MCF 10A (cell line): ENCODE measurements at regions of chr11 and their contacts with region 1.

Region 1: GRCh38 chr11:113494021-113494420 is 18.8 kb upstream of the DRD2 start:
- DNase-seq: peak; percentile 14
- H3K4me3 Mint-ChIP-seq: no peak overlapping the region
- H3K27ac Mint-ChIP-seq: no peak overlapping the region
- H3K4me1 Mint-ChIP-seq: no peaks in the 10 kb centered on the region
- H3K27me3 Mint-ChIP-seq: peaks cover 10% of the 10 kb centered on the region
- CTCF ChIP-seq: peak; percentile 35

Region 2: GRCh38 chr11:113296447-113297205 is 197.4 kb before region 1 on chr11:
- CTCF ChIA-PET with region 1: interaction called, 15 read pairs
- POLR2A ChIA-PET with region 1: no interaction called
- intact Hi-C with region 1: no loop called
- DNase-seq: no peak
- H3K4me3 Mint-ChIP-seq: no peak overlapping the region
- H3K27ac Mint-ChIP-seq: no peak overlapping the region
- H3K4me1 Mint-ChIP-seq: no peaks in the 10 kb centered on the region
- H3K27me3 Mint-ChIP-seq: peaks cover 65% of the 10 kb centered on the region
- CTCF ChIP-seq: no peak

Region 3: GRCh38 chr11:113305440-113306336 is 188.3 kb before region 1 on chr11:
- CTCF ChIA-PET with region 1: interaction called, 72 read pairs
- POLR2A ChIA-PET with region 1: no interaction called
- intact Hi-C with region 1: loop called (anchors 1 kb)
- DNase-seq: peak; percentile 79
- H3K4me3 Mint-ChIP-seq: no peak overlapping the region
- H3K27ac Mint-ChIP-seq: no peak overlapping the region
- H3K4me1 Mint-ChIP-seq: peaks cover 5% of the 10 kb centered on the region
- H3K27me3 Mint-ChIP-seq: peaks cover 13% of the 10 kb centered on the region
- CTCF ChIP-seq: peak; percentile 98

Region 4: DNA sequence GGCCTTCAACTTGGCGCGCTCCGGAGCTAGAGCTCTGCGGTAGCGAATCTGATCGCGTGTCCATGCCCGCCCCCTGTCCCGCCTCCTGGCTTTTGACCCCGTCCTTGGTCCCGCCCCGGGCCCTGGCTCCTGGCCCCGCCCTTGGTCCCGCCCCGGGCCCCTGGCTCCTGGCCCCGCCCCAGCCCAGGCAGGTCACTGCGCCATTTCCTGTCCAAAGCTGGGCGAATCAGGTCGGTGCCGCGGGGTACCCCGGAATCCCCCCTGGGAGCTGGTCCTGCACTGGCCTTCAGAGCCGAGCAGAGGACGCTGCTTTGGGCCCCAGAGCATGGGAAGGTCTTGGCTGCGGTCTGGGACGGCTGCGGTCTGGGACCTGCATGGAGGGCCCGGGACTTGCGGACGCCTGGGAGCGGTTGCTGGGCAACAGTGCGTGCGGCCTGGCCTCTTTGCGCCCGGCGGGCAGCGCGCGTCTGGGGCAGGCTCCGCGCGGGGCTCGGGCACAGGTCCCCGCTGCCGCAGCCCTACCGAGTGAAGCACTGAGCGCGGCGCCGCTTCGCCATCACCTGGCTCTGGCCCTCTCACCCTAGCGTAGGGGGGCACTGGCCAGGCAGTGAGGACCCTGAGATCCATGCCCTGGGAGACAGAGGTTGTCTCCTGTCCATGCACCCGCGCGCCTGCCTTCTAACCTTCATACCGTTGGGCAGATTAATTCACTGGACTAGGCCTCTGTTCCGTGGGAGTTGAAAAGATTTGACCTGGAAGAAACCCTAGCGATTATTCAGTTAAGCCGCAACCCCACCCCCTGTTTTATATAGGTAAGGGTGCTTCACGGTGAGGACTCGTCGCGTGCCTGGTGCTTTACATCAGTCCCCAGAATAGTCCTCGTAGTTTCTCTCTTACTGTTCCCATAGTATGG is 179.4 kb before region 1 on chr11 and contains the start of gene TTC12:
- CTCF ChIA-PET with region 1: interaction called, 21 read pairs
- POLR2A ChIA-PET with region 1: interaction called, 9 read pairs
- intact Hi-C with region 1: loop called (anchors 2 kb)
- DNase-seq: peak; percentile 92
- H3K4me3 Mint-ChIP-seq: peak within 1 kb of the TSS; percentile 80
- H3K27ac Mint-ChIP-seq: peak within 1 kb of the TSS; percentile 87
- H3K4me1 Mint-ChIP-seq: peaks cover 19% of the 10 kb centered on the region
- H3K27me3 Mint-ChIP-seq: no peaks in the 10 kb centered on the region
- CTCF ChIP-seq: no peak
- total RNA-seq, gene TTC12: 30.5 and 41.3 TPM in 2 replicates

Region 5: DNA sequence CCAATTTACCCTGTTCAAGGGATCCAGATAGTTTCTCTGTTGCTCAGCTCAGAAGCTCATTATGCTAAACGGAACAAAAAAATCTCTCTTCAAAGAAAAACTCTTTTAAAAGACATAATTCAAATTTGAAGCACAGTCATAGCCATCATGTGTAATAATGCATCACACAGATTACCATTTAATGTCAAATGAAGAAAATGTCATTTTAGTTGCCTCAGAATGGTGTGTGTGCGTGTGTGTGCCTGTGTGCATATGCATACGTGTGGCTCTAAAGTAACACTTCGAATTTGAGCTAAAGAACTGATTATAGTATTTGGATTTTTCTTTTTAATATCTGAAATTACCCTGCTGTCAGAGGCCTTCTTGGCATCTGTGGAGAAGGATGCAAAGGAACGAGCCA is 169.8 kb before region 1 on chr11:
- CTCF ChIA-PET with region 1: interaction called, 16 read pairs
- POLR2A ChIA-PET with region 1: no interaction called
- intact Hi-C with region 1: no loop called
- DNase-seq: no peak
- H3K4me3 Mint-ChIP-seq: no peak overlapping the region
- H3K27ac Mint-ChIP-seq: no peak overlapping the region
- H3K4me1 Mint-ChIP-seq: no peaks in the 10 kb centered on the region
- H3K27me3 Mint-ChIP-seq: no peaks in the 10 kb centered on the region
- CTCF ChIP-seq: no peak

Region 6: GRCh38 chr11:113532697-113533424 is 38.8 kb after region 1 on chr11:
- CTCF ChIA-PET with region 1: interaction called, 56 read pairs
- POLR2A ChIA-PET with region 1: no interaction called
- intact Hi-C with region 1: no loop called
- DNase-seq: peak; percentile 77
- H3K4me3 Mint-ChIP-seq: no peak overlapping the region
- H3K27ac Mint-ChIP-seq: no peak overlapping the region
- H3K4me1 Mint-ChIP-seq: peaks cover 20% of the 10 kb centered on the region
- H3K27me3 Mint-ChIP-seq: no peaks in the 10 kb centered on the region
- CTCF ChIP-seq: peak; percentile 89

Region 7: DNA sequence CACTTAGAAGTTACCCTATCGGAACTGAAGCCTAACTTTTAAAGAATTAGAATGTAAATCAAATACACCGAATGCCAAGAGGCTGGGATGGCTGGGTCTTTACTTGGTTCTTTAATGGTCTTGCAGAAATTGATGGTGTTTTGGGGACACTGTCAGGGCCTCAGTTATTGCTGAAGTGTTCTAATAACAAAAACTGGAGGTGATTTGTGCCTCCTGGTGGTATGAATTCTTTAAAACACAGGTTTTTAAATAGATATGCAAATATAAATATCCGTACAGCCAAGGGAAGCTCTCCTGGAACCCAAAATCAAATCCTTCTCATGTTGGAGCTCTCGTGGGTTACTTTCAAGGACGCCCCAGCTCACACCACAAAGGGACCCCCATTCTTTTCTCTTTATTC is 231.4 kb after region 1 on chr11:
- CTCF ChIA-PET with region 1: interaction called, 23 read pairs
- POLR2A ChIA-PET with region 1: no interaction called
- intact Hi-C with region 1: loop called (anchors 10 kb)
- DNase-seq: no peak
- H3K4me3 Mint-ChIP-seq: no peak overlapping the region
- H3K27ac Mint-ChIP-seq: no peak overlapping the region
- H3K4me1 Mint-ChIP-seq: peaks cover 12% of the 10 kb centered on the region
- H3K27me3 Mint-ChIP-seq: no peaks in the 10 kb centered on the region
- CTCF ChIP-seq: no peak

Region 8: GRCh38 chr11:113789675-113790320 is 295.8 kb after region 1 on chr11:
- CTCF ChIA-PET with region 1: no interaction called
- POLR2A ChIA-PET with region 1: no interaction called
- intact Hi-C with region 1: no loop called
- DNase-seq: no peak
- H3K4me3 Mint-ChIP-seq: no peak overlapping the region
- H3K27ac Mint-ChIP-seq: no peak overlapping the region
- H3K4me1 Mint-ChIP-seq: no peaks in the 10 kb centered on the region
- H3K27me3 Mint-ChIP-seq: no peaks in the 10 kb centered on the region
- CTCF ChIP-seq: no peak

Region 9: GRCh38 chr11:114159802-114160632 is 666.0 kb after region 1 on chr11:
- CTCF ChIA-PET with region 1: no interaction called
- POLR2A ChIA-PET with region 1: no interaction called
- intact Hi-C with region 1: no loop called
- DNase-seq: peak; percentile 100
- H3K4me3 Mint-ChIP-seq: peak overlapping the region; percentile 65
- H3K27ac Mint-ChIP-seq: peak overlapping the region; percentile 99
- H3K4me1 Mint-ChIP-seq: peaks cover 87% of the 10 kb centered on the region
- H3K27me3 Mint-ChIP-seq: no peaks in the 10 kb centered on the region
- CTCF ChIP-seq: peak; percentile 15